K562 (cell line): ENCODE measurements at regions of chr7 and their contacts with region 1.

Region 1: DNA sequence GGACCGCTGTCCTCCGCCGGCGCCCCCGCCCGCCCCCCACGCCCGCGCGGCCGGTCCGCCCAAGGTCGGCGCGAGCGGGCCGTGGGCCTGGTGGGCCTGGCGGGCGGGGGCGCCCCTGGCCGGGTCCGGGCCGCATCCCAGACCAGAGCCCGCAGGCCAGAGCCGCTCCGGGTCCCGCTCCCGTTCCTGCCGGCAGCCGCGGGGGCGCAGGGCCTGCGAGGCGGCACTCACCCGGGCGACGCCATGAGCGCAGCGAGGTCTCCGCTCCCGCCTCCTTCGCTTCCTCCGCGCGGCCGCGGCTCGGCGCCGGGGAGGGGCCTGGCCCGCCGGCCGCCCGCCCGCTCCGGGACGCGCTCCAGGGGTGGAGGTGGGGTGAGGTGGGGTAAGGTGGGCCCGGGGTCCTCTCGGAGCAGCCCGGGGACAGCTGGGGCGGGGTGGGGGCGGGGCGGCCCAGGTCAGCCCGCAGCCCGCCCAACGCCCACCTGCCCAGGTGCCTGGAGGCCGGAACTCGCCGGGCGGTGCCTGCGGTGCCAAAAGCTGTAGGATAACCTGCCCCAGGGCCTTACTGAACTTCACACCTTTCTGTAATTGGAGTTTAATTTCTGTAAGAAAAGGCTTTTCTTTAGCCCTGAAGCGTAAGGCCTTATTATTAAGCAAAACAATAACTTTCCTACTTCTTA is at the start of gene URGCP:
- DNase-seq: peak; percentile 63 to 85 (median 82)
- ATAC-seq: peak; percentile 88
- H3K4me3 ChIP-seq: peak within 1 kb of the TSS; percentile 57
- H3K27ac ChIP-seq: peak within 1 kb of the TSS; percentile 63
- H3K4me1 ChIP-seq: peaks cover 14 to 26% of the 10 kb centered on the region in 2 experiments
- H3K27me3 ChIP-seq: no peaks in the 10 kb centered on the region
- CTCF ChIP-seq: no peak
- EP300 ChIP-seq: no peak
- POLR2A ChIP-seq: no peak
- RAD21 ChIP-seq: no peak
- polyA plus RNA-seq, gene URGCP: 1.7 to 3.8 TPM

Region 2: DNA sequence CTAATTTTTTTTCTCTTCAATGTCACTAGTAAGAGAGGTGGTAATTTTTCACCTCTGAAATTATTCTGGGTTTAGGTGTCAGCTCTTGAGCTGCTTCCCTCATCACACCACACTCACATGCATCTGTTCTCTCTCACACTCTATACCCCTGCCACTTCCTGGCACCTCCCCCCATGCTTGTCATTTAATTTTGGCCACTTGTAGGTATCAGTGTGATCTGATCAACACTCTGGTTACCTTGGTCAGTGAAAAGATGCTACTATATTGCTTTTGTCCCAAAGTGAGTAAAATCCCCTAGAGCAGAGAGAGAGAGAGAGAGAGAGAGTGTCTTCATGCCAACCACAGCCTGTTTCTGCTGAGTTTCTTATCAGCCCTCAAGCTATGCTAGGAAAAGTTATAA is 281.0 kb before region 1 on chr7:
- CTCF ChIA-PET with region 1: no interaction called
- POLR2A ChIA-PET with region 1: no interaction called
- in situ Hi-C with region 1: no loop called
- intact Hi-C with region 1: no loop called
- DNase-seq: no peak
- ATAC-seq: no peak; the same call in 2 of the 3 replicates
- H3K4me3 ChIP-seq: no peak overlapping the region
- H3K27ac ChIP-seq: no peak overlapping the region
- H3K4me1 ChIP-seq: no peaks in the 10 kb centered on the region
- H3K27me3 ChIP-seq: no peaks in the 10 kb centered on the region
- CTCF ChIP-seq: no peak
- EP300 ChIP-seq: no peak
- POLR2A ChIP-seq: no peak
- RAD21 ChIP-seq: no peak

Region 3: DNA sequence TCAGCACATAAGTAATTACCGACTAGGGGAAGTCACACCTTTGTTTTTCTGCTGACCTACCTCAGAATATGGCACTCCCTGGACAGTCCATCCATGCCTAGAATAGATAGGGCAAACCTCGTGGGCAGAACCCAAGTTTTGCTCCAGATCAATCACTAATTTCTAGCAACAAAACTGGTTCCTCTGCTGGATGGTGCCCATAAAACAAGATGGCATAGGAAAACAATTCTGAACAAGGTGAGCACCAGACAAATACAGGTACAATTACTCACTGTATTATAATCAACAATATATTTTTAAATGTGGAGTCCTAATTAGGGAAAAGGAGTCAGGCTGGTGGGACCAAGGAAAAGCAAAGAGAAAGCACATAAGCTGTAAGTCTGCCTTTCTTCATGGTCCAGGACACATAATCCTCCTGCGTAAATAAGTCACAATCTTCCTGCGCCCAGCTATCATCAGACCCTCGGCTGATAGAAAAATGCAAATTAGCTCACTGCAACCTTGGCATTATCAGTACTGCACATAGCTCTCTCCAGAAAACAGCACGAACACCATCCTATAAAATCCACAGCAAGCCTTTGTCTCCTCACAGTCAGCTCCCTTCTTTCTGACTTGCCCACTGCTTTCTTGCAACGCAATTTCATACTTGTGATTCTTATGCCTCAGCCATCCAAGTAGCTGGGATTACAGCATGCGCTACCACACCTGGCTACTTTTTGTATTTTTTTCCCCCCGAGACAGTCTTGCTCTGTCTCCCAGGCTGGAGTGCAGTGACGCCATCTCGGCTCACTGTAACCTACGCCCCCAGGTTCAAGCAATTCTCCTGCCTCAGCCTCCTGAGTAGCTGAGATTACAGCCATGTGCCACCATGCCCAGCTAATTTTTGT is 15.2 kb before region 1 on chr7:
- CTCF ChIA-PET with region 1: no interaction called
- POLR2A ChIA-PET with region 1: interaction called, 11 read pairs
- in situ Hi-C with region 1: no loop called
- intact Hi-C with region 1: no loop called
- DNase-seq: no peak
- ATAC-seq: peak; percentile 31
- H3K4me3 ChIP-seq: no peak overlapping the region
- H3K27ac ChIP-seq: no peak overlapping the region
- H3K4me1 ChIP-seq: peaks cover 7 to 9% of the 10 kb centered on the region in 2 experiments; a peak in 3 of 5 replicates
- H3K27me3 ChIP-seq: no peaks in the 10 kb centered on the region
- CTCF ChIP-seq: no peak
- EP300 ChIP-seq: no peak
- POLR2A ChIP-seq: no peak
- RAD21 ChIP-seq: no peak

Region 4: DNA sequence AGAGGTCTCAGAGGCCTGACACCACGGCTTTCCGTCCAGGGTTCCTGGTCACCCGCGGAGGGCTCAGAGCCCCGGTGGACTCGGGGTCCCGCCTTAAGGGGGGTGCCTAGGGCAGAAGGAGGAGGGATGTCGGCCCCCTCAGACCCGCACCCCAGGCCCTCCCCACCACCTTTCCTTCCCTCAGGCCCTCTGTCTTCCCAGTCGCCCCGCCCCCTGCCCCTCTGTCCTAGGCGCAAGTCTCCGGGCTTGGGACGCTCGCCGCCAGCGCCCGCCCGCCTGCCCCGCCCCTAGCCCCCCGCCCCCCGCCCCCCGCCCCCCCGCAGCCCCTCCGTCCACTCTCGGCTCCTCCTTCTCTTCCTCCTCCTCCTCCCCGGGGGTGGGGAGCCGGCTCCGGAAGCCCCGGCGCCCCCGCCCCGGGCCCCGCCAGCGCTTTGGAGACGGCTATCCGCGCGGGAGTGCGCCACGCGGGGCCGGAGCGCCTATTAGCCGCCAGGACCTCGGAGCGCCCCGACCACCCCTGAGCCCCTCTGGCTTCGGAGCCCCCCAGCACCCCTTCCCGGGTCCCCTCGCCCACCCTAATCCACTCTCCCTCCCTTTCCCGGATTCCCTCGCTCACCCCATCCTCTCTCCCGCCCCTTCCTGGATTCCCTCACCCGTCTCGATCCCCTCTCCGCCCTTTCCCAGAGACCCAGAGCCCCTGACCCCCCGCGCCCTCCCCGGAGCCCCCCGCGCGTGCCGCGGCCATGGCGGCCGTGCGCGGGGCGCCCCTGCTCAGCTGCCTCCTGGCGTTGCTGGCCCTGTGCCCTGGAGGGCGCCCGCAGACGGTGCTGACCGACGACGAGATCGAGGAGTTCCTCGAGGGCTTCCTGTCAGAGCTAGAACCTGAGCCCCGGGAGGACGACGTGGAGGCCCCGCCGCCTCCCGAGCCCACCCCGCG is 197.7 kb after region 1 on chr7 and contains the start of gene AEBP1:
- CTCF ChIA-PET with region 1: no interaction called
- POLR2A ChIA-PET with region 1: no interaction called
- in situ Hi-C with region 1: no loop called
- intact Hi-C with region 1: no loop called
- DNase-seq: peak in 2 of 4 experiments; percentile 65
- ATAC-seq: 0 out of 3 replicates have a peak, but pooled peaks have one; percentile 13
- H3K4me3 ChIP-seq: no peak within 1 kb of the TSS
- H3K27ac ChIP-seq: no peak within 1 kb of the TSS
- H3K4me1 ChIP-seq: peaks cover 0 to 39% of the 10 kb centered on the region in 2 experiments; a peak in 4 of 5 replicates
- H3K27me3 ChIP-seq: peaks cover 17 to 39% of the 10 kb centered on the region in 2 experiments; a peak in 4 of 5 replicates
- CTCF ChIP-seq: 0 out of 6 replicates have a peak, but pooled peaks of 1 of the 3 experiments have one; percentile 8
- EP300 ChIP-seq: no peak
- POLR2A ChIP-seq: no peak
- RAD21 ChIP-seq: no peak
- polyA plus RNA-seq, gene AEBP1: 0.04 TPM in 1 of 2 experiments, not detected in the other

Region 5: GRCh38 chr7:44264221-44264931 is 357.9 kb after region 1 on chr7:
- CTCF ChIA-PET with region 1: no interaction called
- POLR2A ChIA-PET with region 1: no interaction called
- in situ Hi-C with region 1: no loop called
- intact Hi-C with region 1: no loop called
- DNase-seq: no peak
- ATAC-seq: no peak
- H3K4me3 ChIP-seq: no peak overlapping the region
- H3K27ac ChIP-seq: no peak overlapping the region
- H3K4me1 ChIP-seq: peaks cover 3 to 6% of the 10 kb centered on the region in 2 experiments; a peak in 3 of 5 replicates
- H3K27me3 ChIP-seq: peaks cover 39 to 73% of the 10 kb centered on the region in 2 experiments
- CTCF ChIP-seq: no peak
- EP300 ChIP-seq: no peak
- POLR2A ChIP-seq: no peak
- RAD21 ChIP-seq: no peak